ENCODE measurements at regions of chr18 and their contacts with region 1.

Region 1: DNA sequence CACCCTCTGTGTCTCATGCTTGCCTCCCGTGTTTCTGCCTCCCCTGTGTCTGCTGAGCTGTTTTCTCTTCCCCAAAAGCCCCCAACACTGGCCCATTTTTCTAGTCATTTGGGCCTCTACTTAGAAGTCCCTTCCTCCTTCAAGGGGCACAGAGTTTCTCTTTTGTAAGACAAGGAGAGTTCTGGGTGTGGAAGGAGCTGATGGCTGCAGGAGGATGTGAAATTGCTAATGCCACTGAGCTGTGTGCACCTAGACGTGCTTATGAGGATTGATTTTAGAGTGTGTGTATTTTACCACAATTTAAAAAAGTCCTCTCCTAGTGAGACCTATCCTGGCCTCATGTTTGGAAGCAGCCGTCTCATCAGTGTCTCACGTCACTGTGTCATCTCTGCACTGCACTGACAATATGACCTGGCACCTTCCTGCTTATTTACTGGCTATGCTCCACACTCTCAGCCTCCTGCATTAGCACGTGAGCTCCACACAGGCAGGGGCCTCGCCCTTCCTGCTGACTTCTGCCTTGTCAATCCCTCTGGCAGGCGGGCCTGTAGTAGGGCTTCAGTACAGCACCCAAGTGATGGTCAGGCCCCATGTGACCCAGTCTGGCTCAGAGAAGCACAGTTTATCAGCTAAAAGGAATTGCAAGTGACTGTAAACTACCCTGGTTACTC is 8.0 kb upstream of the MBP start:
- DNase-seq: no peak
- ATAC-seq: no peak
- H3K4me3 ChIP-seq: no peak overlapping the region
- H3K27ac ChIP-seq: no peak overlapping the region
- H3K4me1 ChIP-seq: peaks cover 13% of the 10 kb centered on the region
- H3K27me3 ChIP-seq: peaks cover 4 to 25% of the 10 kb centered on the region in 2 experiments; a peak in 4 of 5 replicates
- CTCF ChIP-seq: no peak
- EP300 ChIP-seq: no peak
- POLR2A ChIP-seq: no peak
- RAD21 ChIP-seq: no peak

Region 2: GRCh38 chr18:77702686-77703085 is 562.1 kb after region 1 on chr18:
- CTCF ChIA-PET with region 1: no interaction called
- POLR2A ChIA-PET with region 1: no interaction called
- in situ Hi-C with region 1: no loop called
- intact Hi-C with region 1: loop called (anchors 5 kb)
- DNase-seq: peak; percentile 10
- ATAC-seq: no peak
- H3K4me3 ChIP-seq: no peak overlapping the region
- H3K27ac ChIP-seq: no peak overlapping the region
- H3K4me1 ChIP-seq: no peaks in the 10 kb centered on the region
- H3K27me3 ChIP-seq: no peaks in the 10 kb centered on the region
- CTCF ChIP-seq: peak; percentile 45
- EP300 ChIP-seq: no peak
- POLR2A ChIP-seq: no peak
- RAD21 ChIP-seq: no peak

Measured in HepG2 (cell line).